ENCODE measurements at regions of chr16 and their contacts with region 1.

Region 1: GRCh38 chr16:4944333-4945281 is 7.7 kb upstream of the PPL start:
- DNase-seq: peak; percentile 90 to 97
- H3K4me3 ChIP-seq: peak overlapping the region in 1 of 2 donors; percentile 32
- H3K27ac ChIP-seq: peak overlapping the region; percentile 79 to 86
- H3K4me1 ChIP-seq: peaks cover 20 to 33% of the 10 kb centered on the region in 2 donors
- H3K27me3 ChIP-seq: no peaks in the 10 kb centered on the region
- CTCF ChIP-seq: no peak

Region 2: DNA sequence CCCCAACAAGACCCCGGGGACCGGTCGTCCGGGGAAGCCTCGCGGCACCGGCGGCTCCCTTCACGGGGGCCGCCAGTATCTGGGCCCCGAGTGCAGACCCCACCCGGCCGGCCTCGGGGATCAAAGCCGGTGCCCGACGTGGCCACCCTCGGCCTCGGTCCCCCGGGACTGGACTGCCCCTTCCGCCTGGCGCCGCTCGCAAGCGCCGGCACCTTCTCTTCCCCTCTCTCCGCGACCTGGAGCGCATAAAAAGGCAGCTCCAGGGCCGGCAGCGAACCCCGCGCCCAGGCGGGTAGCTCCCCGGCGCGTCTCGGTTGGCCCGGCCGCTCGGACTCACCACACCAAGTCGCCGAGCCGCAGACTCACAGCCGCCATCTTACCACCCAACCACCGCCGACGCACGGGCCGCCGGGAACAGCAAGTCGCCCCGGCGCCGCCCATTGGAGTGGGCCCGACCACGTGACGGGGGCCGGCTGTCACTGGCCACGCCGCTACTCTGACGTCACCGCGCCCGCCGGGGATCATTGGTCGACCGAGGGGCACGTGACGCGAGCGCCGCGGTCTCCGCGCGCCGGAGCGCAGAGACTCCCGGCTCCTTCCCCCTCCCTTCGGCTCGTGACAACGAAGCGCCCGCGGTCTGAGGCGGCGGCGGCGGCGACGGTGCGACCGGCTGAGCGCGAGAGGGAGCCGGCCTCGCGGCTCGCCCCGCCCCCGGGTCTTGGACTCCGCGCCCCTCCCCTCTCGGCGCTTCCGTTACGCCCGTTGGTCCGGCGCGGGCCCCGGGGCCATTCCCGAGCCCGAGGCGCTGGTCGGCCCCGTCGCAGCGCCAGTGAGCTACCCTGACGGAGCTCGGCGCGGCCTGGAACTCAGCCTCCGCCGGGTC is 97.5 kb before region 1 on chr16 and contains the starts of genes GLYR1 and UBN1:
- intact Hi-C with region 1: loop called (anchors 5 kb)
- DNase-seq: peak; percentile 97 to 100
- H3K4me3 ChIP-seq: peak within 1 kb of the TSS; percentile 74 to 98
- H3K27ac ChIP-seq: peak within 1 kb of the TSS; percentile 92 to 97
- H3K4me1 ChIP-seq: peaks cover 12 to 23% of the 10 kb centered on the region in 2 donors
- H3K27me3 ChIP-seq: no peaks in the 10 kb centered on the region
- CTCF ChIP-seq: no peak
- total RNA-seq, gene GLYR1: 39.2 TPM
- total RNA-seq, gene UBN1: 31.8 TPM